Spleen (tissue), 13 donors: ENCODE measurements at regions of chr7 and their contacts with region 1.

Region 1: DNA sequence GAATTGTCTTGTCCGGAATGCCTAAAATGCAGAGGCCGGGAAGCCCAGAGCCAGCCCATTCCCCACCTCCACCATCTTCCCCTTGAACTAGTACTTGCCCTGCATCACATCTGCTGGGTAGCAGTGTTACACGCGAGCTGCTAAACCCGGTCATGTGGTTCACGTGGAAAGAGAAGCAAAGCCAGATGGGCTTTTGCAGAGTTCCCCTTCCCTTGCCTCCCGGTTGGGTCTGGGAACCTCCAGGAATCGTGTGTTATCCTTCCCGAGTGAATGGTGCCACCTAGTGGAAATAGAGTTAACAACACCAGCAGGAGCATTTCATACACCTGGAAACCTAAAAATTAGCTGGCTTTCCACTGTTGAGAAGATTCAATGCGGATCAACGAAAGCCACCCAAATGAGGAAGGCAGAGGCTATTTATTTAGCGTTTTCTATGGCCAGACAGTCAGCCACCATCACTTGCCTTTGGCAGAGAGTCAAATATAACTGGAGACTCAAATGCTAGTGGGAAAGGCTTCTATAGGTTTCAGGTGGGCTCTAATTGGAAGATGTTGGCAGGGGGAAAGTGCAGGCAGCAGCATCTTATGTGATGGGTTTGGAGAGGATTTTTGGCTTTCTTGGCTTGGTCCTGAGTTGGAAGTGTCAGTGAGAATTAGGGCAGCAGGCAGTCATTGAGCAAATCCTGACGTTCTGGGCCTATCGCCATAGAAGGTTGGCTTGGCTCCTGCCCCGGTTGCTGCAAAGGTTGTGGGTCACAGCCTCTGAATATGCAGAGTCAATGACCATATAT is 12.9 kb upstream of the DENND2A start:
- DNase-seq: peak; percentile 70
- H3K4me3 ChIP-seq: no peak overlapping the region
- H3K27ac ChIP-seq: no peak overlapping the region
- H3K4me1 ChIP-seq: peaks cover 10 to 32% (median 24%) of the 10 kb centered on the region in 6 donors
- H3K27me3 ChIP-seq: no peaks in the 10 kb centered on the region
- CTCF ChIP-seq: peak; percentile 58 to 88 (median 82)
- POLR2A ChIP-seq: no peak

Region 2: GRCh38 chr7:140517546-140518369 is 135.8 kb before region 1 on chr7:
- intact Hi-C with region 1: loop called (anchors 2 kb)
- DNase-seq: peak; percentile 90
- H3K4me3 ChIP-seq: no peak overlapping the region
- H3K27ac ChIP-seq: peak overlapping the region in 5 of 8 donors; percentile 4 to 74 (median 60)
- H3K4me1 ChIP-seq: peaks cover 0 to 18% (median 9%) of the 10 kb centered on the region in 6 donors
- H3K27me3 ChIP-seq: peaks cover 0 to 10% (median 0%) of the 10 kb centered on the region in 7 donors
- CTCF ChIP-seq: peak; percentile 42 to 87 (median 79)
- POLR2A ChIP-seq: no peak